ENCODE measurements at regions of chr14 and their contacts with region 1.

Region 1: DNA sequence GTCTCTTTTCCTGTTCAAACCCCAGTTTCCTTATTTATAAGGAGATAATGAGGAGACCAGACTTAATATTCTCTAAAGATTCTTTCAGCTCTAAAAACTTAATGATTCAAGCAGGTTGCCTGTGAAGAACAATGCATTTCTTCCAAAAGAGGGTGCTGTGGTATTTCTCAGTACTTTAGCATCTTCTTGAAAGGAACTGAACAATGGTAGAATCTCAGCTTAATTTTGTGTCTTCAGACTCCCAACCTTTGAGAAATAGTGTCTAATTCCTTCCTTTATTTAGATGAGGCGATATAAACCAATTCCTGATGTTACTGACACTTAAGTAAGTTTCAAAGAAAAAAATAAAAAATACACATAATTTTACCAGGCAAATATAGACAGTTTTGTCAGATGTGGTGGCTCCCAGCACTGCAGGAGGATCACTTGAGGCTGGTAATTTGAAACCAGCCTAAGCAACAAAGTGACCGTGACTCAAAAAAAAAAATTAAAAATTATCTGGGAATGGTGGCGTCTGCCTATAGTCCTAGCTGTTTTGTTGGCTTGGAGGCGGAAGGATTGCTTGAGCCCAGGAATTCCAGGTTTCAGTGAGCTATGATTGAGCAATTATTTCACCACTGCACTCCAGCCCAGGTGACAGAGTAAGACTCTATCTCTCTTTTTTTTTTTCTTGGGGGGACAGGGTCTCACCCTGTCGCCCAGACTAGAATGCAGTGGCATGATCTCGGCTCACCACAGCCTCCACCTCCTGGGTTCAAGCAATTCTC is 76.9 kb upstream of the PSMA6 start:
- DNase-seq: peak; percentile 80
- ATAC-seq: peak; percentile 83
- H3K4me3 ChIP-seq: no peak overlapping the region
- H3K27ac ChIP-seq: no peak overlapping the region
- H3K4me1 ChIP-seq: peaks cover 7% of the 10 kb centered on the region
- H3K27me3 ChIP-seq: no peaks in the 10 kb centered on the region
- CTCF ChIP-seq: peak; percentile 84
- POLR2A ChIP-seq: no peak
- RAD21 ChIP-seq: peak; percentile 70

Region 2: DNA sequence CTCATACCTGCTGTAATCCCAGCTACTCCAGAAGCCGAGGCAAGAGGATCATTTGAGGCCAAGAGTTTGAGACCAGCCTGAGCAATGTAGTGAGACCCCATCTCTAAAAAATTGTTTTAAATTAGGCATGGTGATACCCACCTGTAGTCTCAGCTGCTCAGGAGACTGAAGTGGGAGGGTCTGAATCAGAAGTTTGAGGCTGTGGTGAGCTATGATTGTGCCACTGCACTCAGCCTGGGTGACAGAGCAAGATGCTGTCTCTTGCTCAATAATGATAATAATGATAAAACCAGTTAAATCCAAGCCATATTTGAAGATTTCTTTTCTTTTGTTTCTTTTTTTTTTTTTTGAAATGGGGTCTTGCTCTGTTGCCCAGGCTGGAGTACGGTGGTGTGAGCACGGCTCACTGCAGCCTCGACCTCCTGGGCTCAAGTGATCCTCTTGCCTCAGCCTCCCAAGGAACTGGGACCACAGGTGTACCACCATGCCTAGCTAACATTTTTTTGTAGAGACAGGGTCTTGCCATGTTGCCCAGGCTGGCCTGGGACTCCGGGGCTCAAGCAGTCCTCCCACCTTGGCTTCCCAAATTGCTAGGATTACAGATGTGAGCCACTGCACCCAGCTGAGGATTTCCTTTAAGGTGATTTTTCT is 89.6 kb after region 1 on chr14:
- CTCF ChIA-PET with region 1: interaction called, 10 read pairs
- POLR2A ChIA-PET with region 1: no interaction called
- dilution Hi-C with region 1: no loop called
- in situ Hi-C with region 1: no loop called
- intact Hi-C with region 1: no loop called
- DNase-seq: no peak
- ATAC-seq: no peak
- H3K4me3 ChIP-seq: no peak overlapping the region
- H3K27ac ChIP-seq: no peak overlapping the region
- H3K4me1 ChIP-seq: peaks cover 5% of the 10 kb centered on the region
- H3K27me3 ChIP-seq: no peaks in the 10 kb centered on the region
- CTCF ChIP-seq: no peak
- POLR2A ChIP-seq: no peak
- RAD21 ChIP-seq: no peak

Region 3: DNA sequence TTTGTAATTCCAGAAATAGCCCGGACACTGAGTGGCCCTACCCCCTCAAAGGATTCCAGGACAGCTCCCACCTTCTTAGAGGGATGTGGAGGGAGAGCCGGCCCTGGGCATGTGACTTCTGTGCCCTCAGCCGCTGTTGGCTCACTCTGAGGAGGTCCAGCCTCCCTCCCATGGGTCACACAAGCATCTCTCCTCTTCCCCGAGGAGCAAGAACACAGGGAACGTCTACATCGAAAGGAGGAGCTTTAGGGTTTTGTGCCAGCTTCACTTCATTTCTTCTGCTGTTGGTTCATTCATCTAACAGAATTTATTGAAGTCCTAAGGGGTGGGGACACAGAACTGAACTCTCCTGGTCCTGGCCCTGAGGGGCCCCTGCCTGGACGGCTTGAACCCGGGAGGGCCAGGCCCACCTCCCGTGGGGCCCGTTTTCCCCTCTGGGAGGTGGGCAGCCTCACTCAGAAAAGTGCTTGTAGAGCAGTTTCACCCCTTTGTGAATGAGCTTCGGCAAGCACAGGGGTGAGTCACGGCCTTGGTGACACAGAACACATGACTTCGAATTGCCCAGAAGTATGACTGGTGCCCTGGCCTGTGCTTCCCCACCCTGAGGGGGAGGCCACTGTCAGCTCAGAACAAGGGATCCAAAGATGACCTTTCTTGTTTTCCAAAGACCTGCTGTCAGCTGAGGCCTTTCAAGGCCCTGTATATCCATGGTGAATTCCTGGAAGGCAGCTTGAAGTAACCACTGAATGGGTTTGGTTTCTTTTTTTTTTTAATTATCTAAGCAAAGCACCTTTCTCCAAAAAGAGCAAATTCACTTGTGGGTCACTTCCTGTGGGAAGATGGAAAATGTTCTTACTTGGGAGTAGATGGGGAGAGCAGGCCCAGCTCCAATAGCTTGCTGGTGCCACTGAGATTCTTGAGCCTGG is 150.1 kb after region 1 on chr14:
- CTCF ChIA-PET with region 1: no interaction called
- POLR2A ChIA-PET with region 1: no interaction called
- dilution Hi-C with region 1: no loop called
- in situ Hi-C with region 1: no loop called
- intact Hi-C with region 1: no loop called
- DNase-seq: peak; percentile 92
- ATAC-seq: peak; percentile 85
- H3K4me3 ChIP-seq: no peak overlapping the region
- H3K27ac ChIP-seq: peak overlapping the region; percentile 74
- H3K4me1 ChIP-seq: peaks cover 38% of the 10 kb centered on the region
- H3K27me3 ChIP-seq: no peaks in the 10 kb centered on the region
- CTCF ChIP-seq: no peak
- POLR2A ChIP-seq: no peak
- RAD21 ChIP-seq: no peak

Region 4: DNA sequence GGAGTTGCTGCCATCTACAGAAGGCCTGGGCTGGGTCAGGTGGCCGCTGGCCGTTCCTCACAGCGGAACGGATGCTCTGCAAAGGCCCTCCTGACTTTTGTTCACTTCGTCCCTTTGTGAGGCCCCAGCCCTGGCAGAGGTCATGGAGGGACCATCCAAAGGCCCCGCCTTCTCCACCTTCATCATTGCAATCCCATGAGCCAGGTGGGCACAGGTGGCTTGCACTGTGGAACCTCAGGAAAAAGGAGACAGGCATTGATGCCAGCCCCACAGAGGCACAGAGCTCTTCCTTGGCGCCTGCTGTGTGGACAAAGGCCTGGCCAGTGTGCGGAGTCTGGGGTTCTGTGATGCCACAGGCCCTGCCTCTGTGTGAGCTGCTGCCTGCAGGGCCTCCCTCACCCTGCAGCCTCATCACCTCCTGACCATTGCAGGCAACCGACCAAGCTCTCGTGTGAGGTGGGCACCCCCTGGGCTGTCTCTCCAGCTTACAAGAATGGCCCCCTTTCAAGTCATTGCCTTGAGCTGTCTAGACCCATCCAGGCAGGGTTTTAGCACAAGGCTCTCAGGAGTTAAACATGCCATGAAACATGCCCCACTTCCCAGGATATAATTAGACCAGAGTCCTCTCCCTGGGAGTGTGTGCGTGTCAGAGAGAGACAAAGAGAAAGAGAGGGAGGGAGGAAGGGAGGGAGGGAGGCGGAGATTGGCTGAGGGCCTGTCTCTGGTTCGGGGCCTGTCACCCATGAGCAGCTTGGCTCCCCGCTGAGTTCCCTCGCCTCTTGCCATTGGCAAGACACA is 169.9 kb after region 1 on chr14:
- CTCF ChIA-PET with region 1: no interaction called
- POLR2A ChIA-PET with region 1: no interaction called
- dilution Hi-C with region 1: no loop called
- in situ Hi-C with region 1: no loop called
- intact Hi-C with region 1: no loop called
- DNase-seq: peak; percentile 93
- ATAC-seq: peak; percentile 88
- H3K4me3 ChIP-seq: no peak overlapping the region
- H3K27ac ChIP-seq: peak overlapping the region; percentile 89
- H3K4me1 ChIP-seq: peaks cover 21% of the 10 kb centered on the region
- H3K27me3 ChIP-seq: no peaks in the 10 kb centered on the region
- CTCF ChIP-seq: no peak
- POLR2A ChIP-seq: peak; percentile 46
- RAD21 ChIP-seq: no peak

Measured in IMR-90 (cell line).